ENCODE measurements at regions of chr11 and their contacts with region 1.

Region 1: GRCh38 chr11:62591448-62592145 is at the start of gene TUT1:
- DNase-seq: peak; percentile 94 to 99 (median 96)

Region 2: DNA sequence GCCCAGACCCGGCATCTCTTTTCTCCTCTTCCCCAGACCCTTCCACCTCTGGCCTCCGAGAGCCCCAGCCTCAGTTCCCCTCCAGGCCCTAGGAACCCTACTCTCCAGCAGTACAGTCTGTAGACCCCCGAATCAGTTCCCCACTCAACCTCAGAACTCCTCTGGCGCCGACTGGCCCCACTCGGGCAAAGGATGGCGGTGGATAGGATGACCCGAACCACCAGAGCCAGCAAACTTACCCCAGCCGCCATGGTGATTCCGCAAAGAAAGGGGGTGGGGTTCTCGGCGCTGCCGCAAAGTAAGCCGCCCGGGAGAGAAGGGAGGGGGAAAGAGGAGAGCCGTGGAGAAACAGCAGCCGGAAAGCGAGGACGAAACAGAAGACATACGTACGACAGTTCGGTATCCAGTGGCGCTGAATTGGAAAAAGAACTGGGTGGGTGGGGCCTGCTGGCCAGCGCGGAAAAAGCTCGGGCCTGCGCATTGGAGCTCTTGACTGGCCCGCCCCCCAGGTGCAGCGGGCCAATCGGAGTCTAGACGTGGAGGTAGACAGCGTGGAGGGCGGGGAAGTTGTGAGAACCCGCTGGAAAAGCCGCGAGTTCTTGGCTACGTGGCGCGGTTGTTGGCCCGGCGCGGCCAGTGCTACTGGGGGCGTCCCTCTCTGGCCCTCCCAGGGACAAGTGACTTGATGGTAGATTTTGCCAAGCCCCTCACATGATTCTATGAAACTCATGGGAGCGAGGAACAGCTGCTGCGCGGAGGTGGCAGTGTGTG is 17.8 kb before region 1 on chr11 and contains the start of gene EEF1G:
- intact Hi-C with region 1: loop called (anchors 1 kb)
- DNase-seq: peak; percentile 97 to 100 (median 98)

Region 3: GRCh38 chr11:62705880-62706849 is 114.6 kb after region 1 on chr11:
- intact Hi-C with region 1: loop called (anchors 10 kb)
- DNase-seq: peak; percentile 91 to 99 (median 96)

Measured in posterior cingulate gyrus (tissue), 11 donors.